Cardiac septum (tissue), 1 donor: ENCODE measurements at regions of chr7 and their contacts with region 1.

Region 1: GRCh38 chr7:86667732-86668131 is 24.0 kb downstream of the GRM3 start:
- DNase-seq: no peak

Region 2: DNA sequence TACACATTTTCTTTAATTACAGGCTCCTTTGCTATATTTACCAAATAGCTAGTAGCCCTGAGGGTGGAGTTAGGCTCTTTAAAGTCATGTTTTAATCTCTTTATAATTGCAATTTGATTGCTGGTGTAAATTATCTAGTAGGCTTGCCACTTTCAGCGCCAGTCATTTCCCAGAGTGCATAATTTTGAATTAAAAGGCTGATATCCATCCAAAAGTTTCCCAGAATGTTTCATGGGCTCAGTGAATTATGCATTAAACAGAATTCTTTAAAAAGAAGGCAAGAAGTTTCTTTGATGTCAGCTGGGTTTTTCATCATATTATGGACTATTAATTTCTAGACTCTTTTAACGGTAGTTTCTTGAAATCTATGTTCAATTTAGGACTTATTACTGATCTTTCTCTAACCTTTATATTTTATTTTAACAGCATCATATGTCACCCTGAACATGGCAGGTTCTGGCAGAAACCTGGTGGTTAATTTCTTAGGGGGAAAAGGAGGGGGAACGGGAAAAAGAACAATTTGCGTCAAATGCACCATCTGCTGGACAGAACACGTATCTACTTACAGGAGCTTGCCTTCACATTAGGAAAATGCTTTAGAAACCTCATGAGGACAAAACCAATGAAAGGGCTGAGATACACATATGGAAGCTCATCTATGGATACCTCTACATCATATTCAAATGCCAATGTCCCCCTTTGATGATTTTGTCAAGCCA is 147.1 kb after region 1 on chr7:
- intact Hi-C with region 1: loop called (anchors 10 kb)
- DNase-seq: no peak